ENCODE measurements at regions of chr1 and their contacts with region 1.

Region 1: DNA sequence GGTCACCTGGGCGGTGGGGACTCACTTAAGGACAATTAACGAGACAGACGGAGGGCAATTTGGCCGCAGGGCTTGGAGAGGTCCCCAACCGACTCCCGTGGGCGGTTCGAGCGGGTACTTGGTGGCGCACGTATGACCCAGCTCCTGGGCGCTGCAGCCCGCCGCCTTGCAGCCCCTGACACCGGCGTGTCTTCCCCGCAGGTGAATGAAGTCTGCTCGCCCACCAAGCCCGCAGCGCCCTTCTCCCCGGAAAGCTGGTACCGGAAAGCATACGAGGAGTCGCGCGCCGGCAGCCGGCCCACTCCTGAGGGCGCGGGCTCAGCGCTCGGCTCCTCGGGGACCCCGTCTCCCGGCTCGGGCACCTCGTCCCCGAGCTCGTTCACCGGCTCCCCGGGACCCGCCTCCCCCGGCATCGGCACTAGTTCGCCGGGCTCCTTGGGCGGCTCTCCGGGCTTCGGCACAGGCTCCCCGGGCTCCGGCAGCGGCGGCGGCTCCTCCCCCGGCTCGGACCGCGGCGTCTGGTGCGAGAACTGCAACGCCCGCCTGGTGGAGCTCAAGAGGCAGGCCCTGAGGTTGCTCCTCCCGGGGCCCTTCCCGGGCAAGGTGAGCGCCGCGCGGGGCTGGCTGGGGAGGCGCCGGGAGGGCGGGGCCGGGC is 1.4 kb downstream of the KIF26B start:
- DNase-seq: peak; percentile 78 to 92 (median 83)
- ATAC-seq: peak; percentile 71 to 94 (median 90)
- H3K4me3 ChIP-seq: peak overlapping the region; percentile 49 to 72 (median 61)
- H3K27ac ChIP-seq: peak overlapping the region in 2 of 12 donors; percentile 16 to 23
- H3K4me1 ChIP-seq: peaks cover 3 to 43% (median 34%) of the 10 kb centered on the region in 12 donors
- H3K27me3 ChIP-seq: peaks cover 0 to 82% (median 25%) of the 10 kb centered on the region in 9 donors
- CTCF ChIP-seq: peak; percentile 44 to 87 (median 77)
- POLR2A ChIP-seq: no peak

Region 2: DNA sequence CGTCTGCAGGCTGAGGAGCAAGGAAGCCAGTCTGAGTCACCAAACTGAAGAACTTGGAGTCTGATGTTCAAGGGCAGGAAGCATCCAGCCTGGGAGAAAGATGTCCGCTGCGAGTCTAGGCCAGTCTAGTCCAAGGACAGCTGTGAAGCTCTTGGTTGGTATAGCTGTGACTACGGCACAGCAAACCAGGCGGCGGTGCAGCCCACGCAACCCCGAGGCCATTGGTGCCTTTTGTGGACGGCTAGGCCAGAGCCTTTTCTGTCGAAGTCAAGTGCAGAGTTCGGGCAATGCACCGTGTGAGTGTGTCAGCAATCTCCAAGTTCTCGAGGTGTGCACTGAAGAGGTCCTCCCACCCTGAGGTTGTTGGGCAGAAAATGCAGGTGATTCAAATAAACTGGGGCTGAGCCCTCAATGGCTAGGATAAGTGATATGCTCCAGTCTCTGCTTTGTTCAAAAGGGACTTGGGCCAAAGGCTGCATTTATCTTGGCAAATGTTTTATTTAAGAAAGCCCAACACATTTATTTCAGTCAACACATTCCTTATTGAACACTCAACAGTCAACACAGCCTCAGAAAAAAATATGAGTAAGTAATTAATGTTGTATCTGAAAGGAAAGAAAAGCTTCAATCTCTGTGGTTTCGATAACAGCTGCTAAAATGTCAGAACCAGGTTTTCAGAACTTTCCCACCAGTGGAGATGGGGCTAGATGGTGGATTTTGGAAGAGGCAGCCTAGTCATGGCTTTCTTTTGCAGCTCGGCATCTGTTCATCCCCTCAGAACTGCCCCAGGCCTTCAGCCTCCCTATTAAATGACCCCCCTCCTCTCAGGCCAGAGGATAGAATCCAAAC is 398.9 kb before region 1 on chr1:
- intact Hi-C with region 1: no loop called
- DNase-seq: no peak
- ATAC-seq: peak in 1 of 4 donors; percentile 31
- H3K4me3 ChIP-seq: no peak overlapping the region
- H3K27ac ChIP-seq: no peak overlapping the region
- H3K4me1 ChIP-seq: no peaks in the 10 kb centered on the region
- H3K27me3 ChIP-seq: no peaks in the 10 kb centered on the region
- CTCF ChIP-seq: no peak
- POLR2A ChIP-seq: no peak

Region 3: DNA sequence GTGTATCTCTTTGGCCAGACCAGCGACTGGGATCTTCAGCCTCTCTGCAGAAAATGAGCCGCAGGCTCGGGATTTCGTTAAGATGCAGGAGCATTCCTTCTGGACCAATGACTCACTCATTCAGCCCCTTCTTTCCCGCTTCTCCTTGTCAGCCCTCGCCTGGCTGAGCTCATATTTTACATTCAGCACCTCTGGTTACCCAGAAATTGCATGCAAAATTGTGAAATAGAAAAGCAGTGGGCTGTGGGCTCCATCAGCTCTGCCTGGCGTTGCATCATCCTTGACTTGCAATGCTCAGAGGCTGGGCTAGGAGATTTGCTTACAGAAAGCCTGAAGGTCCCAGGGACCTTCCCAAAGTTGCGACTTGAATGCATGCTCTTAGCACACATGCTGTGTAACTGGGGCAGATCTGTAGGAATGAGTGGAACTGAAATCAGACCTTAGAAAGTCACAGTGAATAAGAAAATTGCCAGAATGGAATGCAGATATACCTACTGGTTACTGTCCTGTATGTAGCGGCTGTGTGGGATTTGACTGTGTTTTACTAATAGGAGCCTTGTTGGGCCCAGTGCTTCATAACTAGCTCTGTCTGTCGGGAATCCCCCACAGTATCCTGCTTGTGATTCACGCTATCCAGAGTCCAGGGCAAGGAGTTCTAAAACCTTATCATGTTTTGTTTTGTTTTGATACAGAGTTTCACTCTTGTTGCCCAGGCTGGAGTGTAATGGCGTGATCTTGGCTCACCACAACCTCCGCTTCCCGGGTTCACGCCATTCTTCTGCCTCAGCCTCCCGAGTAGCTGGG is 443.4 kb after region 1 on chr1:
- intact Hi-C with region 1: loop called in 1 of 10 experiments (anchors 5 kb)
- DNase-seq: peak in 2 of 5 donors; percentile 47 to 53
- ATAC-seq: peak; percentile 34 to 85 (median 59)
- H3K4me3 ChIP-seq: peak overlapping the region in 4 of 12 donors; percentile 1 to 14 (median 7)
- H3K27ac ChIP-seq: peak overlapping the region in 3 of 12 donors; percentile 42 to 72 (median 56)
- H3K4me1 ChIP-seq: peaks cover 0 to 17% (median 12%) of the 10 kb centered on the region in 12 donors
- H3K27me3 ChIP-seq: peaks cover 0 to 15% (median 0%) of the 10 kb centered on the region in 9 donors
- CTCF ChIP-seq: no peak
- POLR2A ChIP-seq: no peak

Region 4: GRCh38 chr1:245858722-245859492 is 702.7 kb after region 1 on chr1:
- intact Hi-C with region 1: loop called in 1 of 10 experiments (anchors 10 kb)
- DNase-seq: no peak
- ATAC-seq: no peak
- H3K4me3 ChIP-seq: no peak overlapping the region
- H3K27ac ChIP-seq: no peak overlapping the region
- H3K4me1 ChIP-seq: peaks cover 0 to 11% (median 3%) of the 10 kb centered on the region in 12 donors
- H3K27me3 ChIP-seq: no peaks in the 10 kb centered on the region
- CTCF ChIP-seq: peak in 4 of 12 donors; percentile 2 to 26 (median 18)
- POLR2A ChIP-seq: no peak

Region 5: DNA sequence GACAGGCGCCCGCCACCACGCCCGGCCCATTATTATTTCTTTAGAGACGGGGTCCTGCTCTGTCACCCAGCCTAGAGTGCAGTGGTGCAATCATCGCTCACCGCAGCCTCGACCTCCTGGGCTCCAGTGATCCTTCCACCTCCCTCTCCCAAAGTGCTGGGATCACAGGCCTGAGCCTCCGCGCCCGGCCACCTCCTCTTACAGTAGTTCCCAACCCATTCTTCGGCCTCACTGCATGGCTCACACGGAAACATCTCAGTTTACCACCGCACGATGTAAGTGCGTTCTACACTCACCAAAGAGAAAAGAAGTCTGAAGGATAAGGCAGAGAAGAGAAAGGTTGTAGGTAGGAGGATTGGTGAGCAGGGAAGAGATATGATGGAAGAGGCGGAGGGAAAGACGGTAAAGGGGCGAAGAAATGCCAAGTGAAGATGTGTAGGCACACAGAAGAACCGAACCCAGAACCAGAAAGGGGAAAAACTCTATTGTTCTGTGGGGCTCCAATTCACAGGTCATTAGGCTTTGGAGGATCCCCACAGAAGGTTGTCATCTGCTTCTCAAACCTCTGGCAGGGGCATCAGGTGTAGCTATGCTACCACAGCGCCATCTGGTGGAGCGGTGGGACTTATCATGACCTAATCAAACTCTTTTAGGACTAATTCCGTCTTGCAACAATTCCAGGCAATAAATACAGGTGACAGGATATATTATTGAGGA is 846.7 kb after region 1 on chr1:
- intact Hi-C with region 1: loop called (anchors 1 to 2 kb)
- DNase-seq: peak; percentile 76 to 91 (median 85)
- ATAC-seq: peak in 3 of 4 donors; percentile 75 to 80 (median 77)
- H3K4me3 ChIP-seq: no peak overlapping the region
- H3K27ac ChIP-seq: no peak overlapping the region
- H3K4me1 ChIP-seq: peaks cover 0 to 9% (median 0%) of the 10 kb centered on the region in 12 donors
- H3K27me3 ChIP-seq: no peaks in the 10 kb centered on the region
- CTCF ChIP-seq: peak; percentile 77 to 95 (median 86)
- POLR2A ChIP-seq: no peak

Region 6: GRCh38 chr1:246450611-246451251 is 1294.5 kb after region 1 on chr1:
- intact Hi-C with region 1: loop called in 8 of 10 experiments (anchors 2 to 10 kb)
- DNase-seq: no peak
- ATAC-seq: no peak
- H3K4me3 ChIP-seq: no peak overlapping the region
- H3K27ac ChIP-seq: no peak overlapping the region
- H3K4me1 ChIP-seq: peaks cover 0 to 14% (median 2%) of the 10 kb centered on the region in 12 donors
- H3K27me3 ChIP-seq: no peaks in the 10 kb centered on the region
- CTCF ChIP-seq: peak; percentile 53 to 75 (median 65)
- POLR2A ChIP-seq: no peak

Region 7: GRCh38 chr1:246699095-246699735 is 1543.0 kb after region 1 on chr1:
- intact Hi-C with region 1: loop called in 1 of 10 experiments (anchors 10 kb)
- DNase-seq: peak; percentile 87 to 91 (median 88)
- ATAC-seq: peak; percentile 91 to 97 (median 96)
- H3K4me3 ChIP-seq: peak overlapping the region in 8 of 12 donors; percentile 22 to 52 (median 38)
- H3K27ac ChIP-seq: peak overlapping the region in 11 of 12 donors; percentile 26 to 80 (median 68)
- H3K4me1 ChIP-seq: peaks cover 0 to 18% (median 9%) of the 10 kb centered on the region in 12 donors
- H3K27me3 ChIP-seq: no peaks in the 10 kb centered on the region
- CTCF ChIP-seq: peak; percentile 76 to 97 (median 89)
- POLR2A ChIP-seq: no peak

Measured in heart left ventricle (tissue), 16 donors.